ENCODE measurements at regions of chr1 and their contacts with region 1.

Region 1: GRCh38 chr1:118151312-118151937 is 33.6 kb downstream of the SPAG17 start:
- DNase-seq: peak; percentile 38
- H3K4me3 ChIP-seq: no peak overlapping the region
- H3K27ac ChIP-seq: no peak overlapping the region
- H3K27me3 ChIP-seq: no peaks in the 10 kb centered on the region
- CTCF ChIP-seq: peak; percentile 86

Region 2: GRCh38 chr1:117942293-117942692 is 209.1 kb before region 1 on chr1:
- CTCF ChIA-PET with region 1: no interaction called
- POLR2A ChIA-PET with region 1: no interaction called
- DNase-seq: no peak
- H3K4me3 ChIP-seq: no peak overlapping the region
- H3K27ac ChIP-seq: no peak overlapping the region
- H3K27me3 ChIP-seq: no peaks in the 10 kb centered on the region
- CTCF ChIP-seq: no peak

Region 3: GRCh38 chr1:119008483-119009311 is 857.3 kb after region 1 on chr1:
- CTCF ChIA-PET with region 1: interaction called, 11 read pairs
- POLR2A ChIA-PET with region 1: no interaction called
- DNase-seq: peak; percentile 11
- H3K4me3 ChIP-seq: peak overlapping the region; percentile 44
- H3K27ac ChIP-seq: no peak overlapping the region
- H3K27me3 ChIP-seq: peaks cover 57% of the 10 kb centered on the region
- CTCF ChIP-seq: peak; percentile 65